Activated CD4-positive, alpha-beta T cell treated with anti-CD3 and anti-CD28 coated beads for 36 hours (primary cell): ENCODE measurements at regions of chr9 and their contacts with region 1.

Region 1: GRCh38 chr9:134730761-134731496 is 89.3 kb downstream of the COL5A1 start:
- DNase-seq: no peak
- ATAC-seq: no peak
- H3K4me3 Mint-ChIP-seq: no peak overlapping the region
- H3K27ac Mint-ChIP-seq: no peak overlapping the region
- H3K4me1 Mint-ChIP-seq: no peaks in the 10 kb centered on the region
- H3K27me3 Mint-ChIP-seq: no peaks in the 10 kb centered on the region

Region 2: GRCh38 chr9:134226221-134226930 is 504.6 kb before region 1 on chr9:
- CTCF ChIA-PET with region 1: no interaction called
- POLR2A ChIA-PET with region 1: no interaction called
- intact Hi-C with region 1: no loop called
- DNase-seq: no peak
- ATAC-seq: no peak
- H3K4me3 Mint-ChIP-seq: no peak overlapping the region
- H3K27ac Mint-ChIP-seq: no peak overlapping the region
- H3K4me1 Mint-ChIP-seq: no peaks in the 10 kb centered on the region
- H3K27me3 Mint-ChIP-seq: no peaks in the 10 kb centered on the region

Region 3: GRCh38 chr9:134660407-134660806 is 70.5 kb before region 1 on chr9:
- CTCF ChIA-PET with region 1: no interaction called
- POLR2A ChIA-PET with region 1: no interaction called
- intact Hi-C with region 1: no loop called
- DNase-seq: peak; percentile 53
- ATAC-seq: no peak
- H3K4me3 Mint-ChIP-seq: no peak overlapping the region
- H3K27ac Mint-ChIP-seq: no peak overlapping the region
- H3K4me1 Mint-ChIP-seq: no peaks in the 10 kb centered on the region
- H3K27me3 Mint-ChIP-seq: no peaks in the 10 kb centered on the region

Region 4: DNA sequence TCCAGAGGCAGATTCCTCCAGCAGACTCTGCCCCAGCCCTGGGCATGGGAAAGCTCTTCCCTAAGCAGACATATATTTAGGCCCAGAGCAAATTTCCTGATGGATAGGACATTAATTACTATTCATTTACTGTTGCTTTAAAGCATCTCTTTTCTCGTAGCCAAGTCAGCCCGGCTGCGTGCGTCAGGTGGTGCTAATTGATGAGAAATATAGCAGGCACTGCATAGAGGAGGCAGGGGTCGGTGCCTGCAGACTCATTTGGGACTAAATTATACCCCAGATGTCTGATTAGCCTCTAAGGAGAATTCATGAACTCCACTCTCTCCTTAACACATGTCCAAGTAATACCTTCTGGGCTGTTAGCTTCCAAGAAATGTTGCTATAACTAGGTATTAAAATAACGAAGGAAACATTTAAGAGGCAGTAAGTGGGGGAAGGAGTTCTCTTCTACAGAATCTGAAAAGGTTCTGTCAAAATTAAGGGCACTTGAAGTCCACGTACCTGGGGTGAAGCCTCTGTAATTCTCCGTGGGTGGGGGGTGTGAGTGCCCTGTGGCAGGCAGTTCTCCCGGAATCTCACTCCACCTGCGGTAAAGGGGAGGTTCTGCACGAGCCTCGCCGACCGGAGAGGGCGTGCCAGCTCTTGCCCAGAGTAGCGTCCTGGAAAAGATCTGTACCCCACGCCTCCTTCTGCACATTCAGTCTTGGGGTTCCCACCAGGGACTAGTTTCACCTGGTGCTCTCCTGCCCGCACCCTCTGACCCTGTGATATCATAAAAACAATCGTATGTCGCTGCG is 33.7 kb after region 1 on chr9:
- CTCF ChIA-PET with region 1: no interaction called
- POLR2A ChIA-PET with region 1: no interaction called
- intact Hi-C with region 1: loop called in 1 of 2 experiments (anchors 1 kb)
- DNase-seq: no peak
- ATAC-seq: no peak
- H3K4me3 Mint-ChIP-seq: no peak overlapping the region
- H3K27ac Mint-ChIP-seq: no peak overlapping the region
- H3K4me1 Mint-ChIP-seq: no peaks in the 10 kb centered on the region
- H3K27me3 Mint-ChIP-seq: peaks cover 2% of the 10 kb centered on the region